Heart left ventricle (tissue), 16 donors: ENCODE measurements at regions of chr10 and their contacts with region 1.

Region 1: GRCh38 chr10:689433-690371 is at the start of gene DIP2C:
- DNase-seq: peak; percentile 77 to 88 (median 81)
- ATAC-seq: peak; percentile 79 to 90 (median 82)
- H3K4me3 ChIP-seq: peak within 1 kb of the TSS; percentile 67 to 98 (median 87)
- H3K27ac ChIP-seq: peak within 1 kb of the TSS; percentile 71 to 93 (median 88)
- H3K4me1 ChIP-seq: peaks cover 0 to 22% (median 13%) of the 10 kb centered on the region in 12 donors
- H3K27me3 ChIP-seq: peaks cover 0 to 12% (median 0%) of the 10 kb centered on the region in 9 donors
- CTCF ChIP-seq: no peak
- POLR2A ChIP-seq: peak in 1 of 2 donors; percentile 47
- total RNA-seq, gene DIP2C: 23.2 to 43.1 (median 30.3) TPM

Region 2: DNA sequence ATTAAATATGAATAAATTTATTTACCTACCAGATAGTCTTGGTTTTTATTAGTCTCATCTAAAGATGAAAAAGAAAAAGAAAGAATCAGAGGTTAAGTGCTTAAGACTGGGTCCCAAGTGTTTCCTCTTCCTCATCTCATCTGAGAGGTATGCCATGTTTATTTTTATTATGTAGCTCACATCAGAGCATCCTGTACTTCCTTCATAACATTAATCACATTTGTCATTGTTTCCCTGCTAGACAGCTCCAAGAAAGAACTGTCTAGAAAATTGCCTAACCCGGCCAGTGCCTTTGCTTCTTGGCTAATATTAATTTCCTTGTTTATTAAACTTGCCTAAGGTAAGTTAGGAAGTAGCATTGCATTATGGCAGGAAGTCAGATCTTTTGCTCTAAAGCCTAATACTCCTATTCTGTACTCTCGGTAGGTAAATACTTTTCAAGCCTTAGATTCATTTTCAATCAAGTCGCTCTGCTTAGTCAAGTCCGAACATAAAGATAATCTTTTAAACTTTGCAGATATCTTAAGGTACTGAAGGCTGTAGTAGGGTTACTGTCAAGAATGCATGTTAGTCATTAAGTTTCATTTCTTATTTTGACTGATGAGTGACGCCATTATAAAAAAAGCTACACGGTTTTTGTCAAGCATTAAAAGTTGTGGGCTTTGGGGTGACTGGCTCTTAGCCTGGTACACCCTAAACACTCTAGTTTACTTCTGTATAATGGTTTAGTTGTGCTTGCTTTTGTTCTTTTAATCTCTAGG is 507.1 kb before region 1 on chr10:
- intact Hi-C with region 1: no loop called
- DNase-seq: no peak
- ATAC-seq: peak in 1 of 4 donors; percentile 52
- H3K4me3 ChIP-seq: no peak overlapping the region
- H3K27ac ChIP-seq: no peak overlapping the region
- H3K4me1 ChIP-seq: peaks cover 0 to 13% (median 0%) of the 10 kb centered on the region in 12 donors
- H3K27me3 ChIP-seq: no peaks in the 10 kb centered on the region
- CTCF ChIP-seq: no peak
- POLR2A ChIP-seq: no peak

Region 3: GRCh38 chr10:251982-252582 is 437.6 kb before region 1 on chr10:
- intact Hi-C with region 1: no loop called
- DNase-seq: no peak
- ATAC-seq: no peak
- H3K4me3 ChIP-seq: no peak overlapping the region
- H3K27ac ChIP-seq: no peak overlapping the region
- H3K4me1 ChIP-seq: no peaks in the 10 kb centered on the region
- H3K27me3 ChIP-seq: no peaks in the 10 kb centered on the region
- CTCF ChIP-seq: no peak
- POLR2A ChIP-seq: no peak

Region 4: GRCh38 chr10:520406-520795 is 169.3 kb before region 1 on chr10:
- intact Hi-C with region 1: loop called in 4 of 10 experiments (anchors 10 kb)
- DNase-seq: no peak
- ATAC-seq: peak in 3 of 4 donors; percentile 29 to 47 (median 45)
- H3K4me3 ChIP-seq: no peak overlapping the region
- H3K27ac ChIP-seq: peak overlapping the region in 1 of 12 donors; percentile 35
- H3K4me1 ChIP-seq: peaks cover 0 to 22% (median 5%) of the 10 kb centered on the region in 12 donors
- H3K27me3 ChIP-seq: no peaks in the 10 kb centered on the region
- CTCF ChIP-seq: no peak
- POLR2A ChIP-seq: no peak

Region 5: DNA sequence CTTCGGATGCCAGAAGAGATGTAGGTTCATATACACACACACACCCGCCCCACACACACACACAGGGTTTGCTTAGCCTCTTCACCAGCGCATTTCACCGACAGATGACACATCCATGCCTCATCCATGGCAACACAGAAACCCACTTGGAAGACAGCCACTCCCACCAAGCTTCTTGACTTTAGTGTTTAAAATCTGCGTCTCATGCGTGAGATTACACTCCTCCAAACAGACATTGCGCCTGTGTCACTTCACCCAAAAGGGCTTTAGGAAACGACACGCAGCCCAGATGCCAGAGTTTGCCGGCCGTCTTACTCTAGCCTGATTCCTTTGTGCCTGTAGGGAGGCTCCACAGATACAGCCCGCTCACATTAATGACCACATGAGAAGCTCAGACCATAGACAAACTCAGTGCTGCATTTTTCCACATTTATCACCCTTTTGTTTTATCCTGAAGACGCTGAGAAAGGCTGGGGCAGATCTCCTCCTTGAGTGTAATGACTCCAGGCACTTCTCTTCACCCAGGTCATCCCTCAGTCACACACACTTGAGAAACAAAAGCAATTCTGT is 74.0 kb before region 1 on chr10:
- intact Hi-C with region 1: loop called in 4 of 10 experiments (anchors 5 to 10 kb)
- DNase-seq: no peak
- ATAC-seq: no peak
- H3K4me3 ChIP-seq: no peak overlapping the region
- H3K27ac ChIP-seq: peak overlapping the region in 1 of 12 donors; percentile 70
- H3K4me1 ChIP-seq: peaks cover 0 to 78% (median 44%) of the 10 kb centered on the region in 12 donors
- H3K27me3 ChIP-seq: no peaks in the 10 kb centered on the region
- CTCF ChIP-seq: no peak
- POLR2A ChIP-seq: no peak

Region 6: DNA sequence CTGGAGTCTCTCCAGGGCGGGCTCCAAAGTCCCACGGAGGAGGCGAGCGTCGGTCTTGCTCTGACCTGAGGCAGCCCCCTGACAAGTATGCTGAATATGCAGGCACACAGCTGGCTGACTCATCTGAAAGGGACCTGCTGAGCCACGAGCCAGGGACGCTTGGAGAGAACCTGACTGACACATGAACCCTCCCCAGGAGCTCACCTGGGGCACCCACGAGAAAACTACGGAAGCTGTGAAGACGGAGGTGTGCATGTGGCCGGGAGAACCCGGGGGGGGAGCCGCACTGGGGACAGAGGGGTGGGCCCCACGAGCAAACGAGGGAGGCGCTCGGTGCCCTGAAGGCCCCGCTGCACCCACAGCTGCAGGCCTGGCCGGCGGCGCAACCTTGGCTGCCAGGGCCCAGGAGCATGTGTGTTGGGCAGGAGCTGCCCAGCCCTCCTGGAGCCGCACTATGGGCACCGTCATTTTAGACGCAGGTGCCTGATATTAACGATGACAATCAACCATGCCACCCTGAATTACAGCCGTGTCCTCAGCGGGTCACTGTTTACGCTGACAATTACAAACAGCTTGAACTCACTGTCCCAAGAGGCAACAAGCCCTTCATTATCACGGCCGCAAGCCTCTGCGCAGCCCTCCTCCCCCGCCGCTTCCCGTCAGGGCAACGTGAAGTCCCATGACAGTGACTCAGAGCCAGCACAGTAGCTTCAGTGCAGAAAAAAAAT is 64.9 kb before region 1 on chr10:
- intact Hi-C with region 1: loop called in 5 of 10 experiments (anchors 2 to 10 kb)
- DNase-seq: peak; percentile 79 to 88 (median 83)
- ATAC-seq: peak; percentile 80 to 92 (median 86)
- H3K4me3 ChIP-seq: peak overlapping the region in 10 of 12 donors; percentile 2 to 43 (median 33)
- H3K27ac ChIP-seq: peak overlapping the region; percentile 77 to 95 (median 90)
- H3K4me1 ChIP-seq: peaks cover 11 to 77% (median 36%) of the 10 kb centered on the region in 12 donors
- H3K27me3 ChIP-seq: peaks cover 0 to 5% (median 0%) of the 10 kb centered on the region in 9 donors
- CTCF ChIP-seq: no peak
- POLR2A ChIP-seq: no peak

Region 7: GRCh38 chr10:1754506-1755153 is 1064.9 kb after region 1 on chr10:
- intact Hi-C with region 1: no loop called
- DNase-seq: peak in 1 of 5 donors; percentile 47
- ATAC-seq: no peak
- H3K4me3 ChIP-seq: no peak overlapping the region
- H3K27ac ChIP-seq: no peak overlapping the region
- H3K4me1 ChIP-seq: no peaks in the 10 kb centered on the region
- H3K27me3 ChIP-seq: peaks cover 0 to 21% (median 0%) of the 10 kb centered on the region in 9 donors
- CTCF ChIP-seq: no peak
- POLR2A ChIP-seq: no peak